Upper lobe of right lung (tissue), 1 donor: ENCODE measurements at regions of chr7 and their contacts with region 1.

Region 1: DNA sequence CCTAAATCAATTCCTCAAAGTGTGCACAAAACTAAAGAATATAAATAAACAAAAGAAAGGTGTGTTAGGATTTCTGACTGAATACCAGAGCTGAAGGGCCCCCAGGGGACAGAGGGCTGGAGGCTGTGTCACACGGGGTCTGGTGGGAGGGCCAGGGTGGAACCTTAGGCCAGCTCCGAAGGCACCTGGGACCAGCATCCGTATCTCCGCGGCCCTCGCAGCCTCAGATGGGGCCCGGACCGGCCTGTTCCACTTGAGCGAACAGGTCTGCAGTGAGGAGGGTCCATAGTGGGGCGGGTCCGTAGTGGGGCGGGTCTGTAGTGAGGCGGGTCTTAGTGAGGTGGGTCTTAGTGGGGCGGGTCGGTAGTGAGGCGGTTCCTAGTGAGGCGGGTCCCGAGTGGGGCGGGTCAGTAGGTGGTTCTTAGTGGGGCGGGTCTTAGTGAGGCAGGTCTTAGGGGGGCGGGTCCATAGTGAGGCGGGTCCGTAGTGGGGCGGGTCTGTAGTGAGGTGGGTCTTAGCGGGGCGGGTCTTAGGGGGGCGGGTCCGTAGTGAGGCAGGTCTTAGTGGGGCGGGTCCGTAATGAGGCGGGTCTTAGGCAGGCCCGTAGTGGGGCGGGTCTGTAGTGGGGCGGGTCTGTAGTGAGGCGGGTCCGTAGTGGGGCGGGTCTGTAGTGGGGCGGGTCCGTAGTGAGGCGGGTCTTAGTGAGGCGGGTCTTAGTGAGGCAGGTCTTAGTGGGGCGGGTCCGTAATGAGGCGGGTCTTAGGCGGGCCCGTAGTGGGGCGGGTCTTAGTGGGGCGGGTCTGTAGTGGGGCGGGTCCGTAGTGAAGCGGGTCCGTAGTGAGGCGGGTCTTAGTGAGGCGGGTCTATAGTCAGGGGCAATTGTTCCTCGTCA is 15.1 kb downstream of the GPR146 start:
- DNase-seq: peak; percentile 84
- ATAC-seq: peak; percentile 66
- H3K4me3 ChIP-seq: no peak overlapping the region
- H3K27ac ChIP-seq: peak overlapping the region; percentile 75
- H3K4me1 ChIP-seq: peaks cover 31% of the 10 kb centered on the region
- H3K27me3 ChIP-seq: no peaks in the 10 kb centered on the region
- CTCF ChIP-seq: no peak

Region 2: GRCh38 chr7:992709-993607 is 66.5 kb before region 1 on chr7:
- intact Hi-C with region 1: loop called (anchors 5 kb)
- DNase-seq: peak; percentile 99
- ATAC-seq: peak; percentile 98
- H3K4me3 ChIP-seq: no peak overlapping the region
- H3K27ac ChIP-seq: no peak overlapping the region
- H3K4me1 ChIP-seq: no peaks in the 10 kb centered on the region
- H3K27me3 ChIP-seq: peaks cover 14% of the 10 kb centered on the region
- CTCF ChIP-seq: peak; percentile 100